T-cell (primary cell): ENCODE measurements at regions of chr5 and their contacts with region 1.

Region 1: GRCh38 chr5:36079200-36079761 is 12.6 kb upstream of the UGT3A2 start:
- DNase-seq: peak in 2 of 35 experiments; percentile 18 to 54
- ATAC-seq: peak in 2 of 4 experiments; percentile 70 to 71
- H3K4me3 ChIP-seq: no peak overlapping the region
- H3K4me3 Mint-ChIP-seq: no peak overlapping the region
- H3K27ac ChIP-seq: no peak overlapping the region
- H3K27ac Mint-ChIP-seq: no peak overlapping the region
- H3K4me1 ChIP-seq: peaks cover 0 to 4% of the 10 kb centered on the region in 2 experiments
- H3K4me1 Mint-ChIP-seq: peaks cover 0 to 2% (median 0%) of the 10 kb centered on the region in 3 donors
- H3K27me3 ChIP-seq: peaks cover 0 to 18% of the 10 kb centered on the region in 2 experiments
- H3K27me3 Mint-ChIP-seq: peaks cover 17 to 34% of the 10 kb centered on the region in 2 donors

Region 2: DNA sequence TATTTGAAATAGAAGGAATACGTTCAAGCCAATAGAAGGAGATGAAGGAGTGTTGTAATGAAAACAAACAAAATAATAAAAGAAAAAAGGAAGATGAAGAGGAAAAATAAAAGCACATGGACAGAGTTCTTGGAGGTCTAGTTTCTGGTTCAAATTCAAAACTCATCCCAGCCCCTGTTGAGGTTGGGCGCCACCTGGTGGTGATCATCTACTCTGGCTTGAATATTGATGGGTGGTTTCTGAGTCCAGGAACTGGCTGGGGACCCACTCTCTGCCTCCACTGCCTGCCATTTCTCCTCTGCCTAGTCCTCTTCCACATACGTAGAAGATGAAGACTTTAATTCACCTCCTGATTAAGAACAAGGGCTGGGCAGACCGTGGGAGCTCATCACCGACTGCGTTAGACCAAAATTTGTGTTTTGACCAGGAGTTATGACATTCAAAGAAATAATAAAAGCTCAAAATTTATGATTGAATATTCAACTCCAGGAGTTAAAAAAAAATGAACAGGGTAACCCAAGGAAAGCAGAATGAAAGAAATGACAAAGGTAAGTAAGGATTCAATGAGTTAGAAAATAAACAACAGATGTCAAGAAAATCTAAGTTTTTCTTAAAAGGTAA is 428.2 kb after region 1 on chr5:
- CTCF ChIA-PET with region 1: interaction called in 1 of 2 experiments, 14 read pairs
- POLR2A ChIA-PET with region 1: no interaction called
- DNase-seq: peak; percentile 17 to 74 (median 54)
- ATAC-seq: peak in 2 of 4 experiments; percentile 45 to 52
- H3K4me3 ChIP-seq: no peak overlapping the region
- H3K4me3 Mint-ChIP-seq: no peak overlapping the region
- H3K27ac ChIP-seq: no peak overlapping the region
- H3K27ac Mint-ChIP-seq: no peak overlapping the region
- H3K4me1 ChIP-seq: no peaks in the 10 kb centered on the region
- H3K4me1 Mint-ChIP-seq: peaks cover 0 to 15% (median 0%) of the 10 kb centered on the region in 3 donors
- H3K27me3 ChIP-seq: peaks cover 0 to 8% of the 10 kb centered on the region in 2 experiments
- H3K27me3 Mint-ChIP-seq: peaks cover 10 to 20% of the 10 kb centered on the region in 2 donors